WTC11 (cell line): ENCODE measurements at regions of chrX and their contacts with region 1.

Region 1: DNA sequence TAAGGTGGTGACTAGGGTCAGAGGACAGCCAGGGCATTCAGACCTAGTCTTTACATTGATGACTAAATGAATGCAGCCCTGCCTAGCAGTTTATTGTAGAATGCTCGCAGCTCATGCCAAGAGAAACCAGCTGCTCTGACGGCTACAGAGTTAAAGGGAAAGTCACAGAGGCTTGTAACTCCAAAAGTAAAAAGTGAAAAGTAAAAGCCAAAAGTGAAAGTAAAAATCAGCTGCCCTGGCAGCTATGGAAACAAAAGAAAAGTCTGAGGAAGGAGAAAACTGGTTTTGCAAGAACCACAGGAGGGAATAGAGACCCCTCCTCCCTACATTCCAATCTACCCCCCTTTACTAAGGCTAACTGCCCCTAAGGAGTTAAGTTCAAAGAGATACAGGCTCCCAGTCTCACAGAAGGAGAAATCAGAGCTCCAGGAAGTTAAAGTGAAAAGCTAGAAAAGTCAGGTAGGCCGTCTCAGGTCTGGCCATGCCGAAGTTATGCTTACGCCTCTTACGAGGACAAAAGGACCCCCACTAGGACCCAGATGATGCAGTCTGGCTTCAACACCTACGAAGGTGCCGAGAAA is 6.0 kb downstream of the GAGE10 start:
- DNase-seq: no peak
- ATAC-seq: peak; percentile 91
- H3K4me3 Mint-ChIP-seq: peak overlapping the region; percentile 65
- H3K27ac Mint-ChIP-seq: peak overlapping the region; percentile 78
- H3K4me1 Mint-ChIP-seq: peaks cover 45% of the 10 kb centered on the region
- H3K27me3 Mint-ChIP-seq: no peaks in the 10 kb centered on the region
- CTCF ChIP-seq: no peak

Region 2: GRCh38 chrX:49230469-49231232 is 78.8 kb before region 1 on chrX:
- CTCF ChIA-PET with region 1: no interaction called
- POLR2A ChIA-PET with region 1: no interaction called
- DNase-seq: peak; percentile 82
- ATAC-seq: peak; percentile 88
- H3K4me3 Mint-ChIP-seq: peak overlapping the region; percentile 75
- H3K27ac Mint-ChIP-seq: peak overlapping the region; percentile 57; the same call in 1 of the 2 replicates
- H3K4me1 Mint-ChIP-seq: peaks cover 10% of the 10 kb centered on the region
- H3K27me3 Mint-ChIP-seq: peaks cover 7% of the 10 kb centered on the region
- CTCF ChIP-seq: no peak

Region 3: DNA sequence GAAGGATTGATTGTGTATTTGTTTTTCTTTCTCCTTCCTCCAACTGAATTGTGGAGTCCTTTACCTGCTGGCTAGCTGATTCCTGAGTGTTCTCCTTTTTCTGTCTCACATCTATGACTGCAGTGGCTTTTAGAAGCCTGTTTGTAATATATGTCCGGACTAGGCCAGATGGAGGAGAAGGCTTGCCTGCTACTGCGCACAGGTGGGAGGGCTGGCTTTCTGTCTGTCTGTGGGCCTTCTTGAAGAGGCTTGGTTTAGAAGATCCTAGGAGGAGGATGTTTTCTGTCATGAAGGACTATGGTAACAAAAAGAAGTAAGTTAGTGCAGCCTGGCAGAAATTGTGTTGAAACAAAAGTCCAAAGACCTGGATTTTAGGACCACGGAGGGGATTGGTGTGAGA is 31.4 kb before region 1 on chrX:
- CTCF ChIA-PET with region 1: no interaction called
- POLR2A ChIA-PET with region 1: no interaction called
- DNase-seq: no peak
- ATAC-seq: no peak
- H3K4me3 Mint-ChIP-seq: no peak overlapping the region
- H3K27ac Mint-ChIP-seq: 0 out of 2 replicates have a peak overlapping the region, but pooled peaks have one; percentile 54
- H3K4me1 Mint-ChIP-seq: peaks cover 17% of the 10 kb centered on the region
- H3K27me3 Mint-ChIP-seq: no peaks in the 10 kb centered on the region
- CTCF ChIP-seq: no peak

Region 4: GRCh38 chrX:49291615-49292337 is 17.7 kb before region 1 on chrX:
- CTCF ChIA-PET with region 1: interaction called, 10 read pairs
- POLR2A ChIA-PET with region 1: no interaction called
- DNase-seq: peak; percentile 78
- ATAC-seq: peak; percentile 93
- H3K4me3 Mint-ChIP-seq: no peak overlapping the region
- H3K27ac Mint-ChIP-seq: peak overlapping the region; percentile 73; the same call in 1 of the 2 replicates
- H3K4me1 Mint-ChIP-seq: peaks cover 3% of the 10 kb centered on the region
- H3K27me3 Mint-ChIP-seq: no peaks in the 10 kb centered on the region
- CTCF ChIP-seq: peak; percentile 44